Sigmoid colon (tissue), 7 donors: ENCODE measurements at regions of chr4 and their contacts with region 1.

Region 1: GRCh38 chr4:168831919-168832762 is 177.9 kb downstream of the CBR4 start:
- DNase-seq: peak; percentile 96
- H3K4me3 ChIP-seq: peak overlapping the region; percentile 76 to 97 (median 90)
- H3K27ac ChIP-seq: peak overlapping the region; percentile 94 to 99 (median 98)
- H3K4me1 ChIP-seq: peaks cover 0 to 33% (median 20%) of the 10 kb centered on the region in 4 donors
- H3K27me3 ChIP-seq: no peaks in the 10 kb centered on the region
- CTCF ChIP-seq: no peak
- EP300 ChIP-seq: peak in 3 of 4 donors; percentile 38 to 78 (median 66)
- POLR2A ChIP-seq: peak; percentile 96 to 98

Region 2: GRCh38 chr4:168631241-168632162 is 200.6 kb before region 1 on chr4:
- intact Hi-C with region 1: loop called (anchors 10 kb)
- DNase-seq: peak; percentile 86
- H3K4me3 ChIP-seq: peak overlapping the region; percentile 51 to 65 (median 60)
- H3K27ac ChIP-seq: peak overlapping the region; percentile 70 to 93 (median 83)
- H3K4me1 ChIP-seq: peaks cover 0 to 46% (median 39%) of the 10 kb centered on the region in 4 donors
- H3K27me3 ChIP-seq: no peaks in the 10 kb centered on the region
- CTCF ChIP-seq: peak; percentile 38 to 67 (median 56)
- EP300 ChIP-seq: no peak
- POLR2A ChIP-seq: no peak

Region 3: DNA sequence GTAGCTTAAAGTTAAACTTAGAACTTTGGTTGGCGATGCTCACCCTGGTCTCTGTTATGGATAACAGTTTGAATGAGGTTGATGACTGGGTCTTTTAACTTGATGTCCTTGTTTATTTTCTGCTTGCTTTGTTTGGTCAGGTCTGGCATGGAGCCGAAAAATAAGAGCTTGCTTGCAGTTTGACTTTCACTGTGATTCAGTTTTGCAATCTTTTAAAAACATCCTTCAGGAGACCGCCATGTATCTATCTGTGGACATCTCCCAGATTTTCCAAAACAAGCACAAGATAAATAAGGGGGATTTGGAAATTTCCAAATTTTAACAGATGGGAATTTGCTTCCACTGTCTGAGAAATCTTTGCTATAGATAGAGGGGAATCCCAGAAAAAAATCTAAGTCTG is 88.5 kb before region 1 on chr4:
- intact Hi-C with region 1: no loop called
- DNase-seq: no peak
- H3K4me3 ChIP-seq: no peak overlapping the region
- H3K27ac ChIP-seq: no peak overlapping the region
- H3K4me1 ChIP-seq: peaks cover 0 to 19% (median 0%) of the 10 kb centered on the region in 4 donors
- H3K27me3 ChIP-seq: no peaks in the 10 kb centered on the region
- CTCF ChIP-seq: no peak
- EP300 ChIP-seq: no peak
- POLR2A ChIP-seq: no peak

Region 4: GRCh38 chr4:168815379-168816345 is 16.5 kb before region 1 on chr4:
- intact Hi-C with region 1: loop called (anchors 1 kb)
- DNase-seq: peak; percentile 70
- H3K4me3 ChIP-seq: peak overlapping the region in 3 of 4 donors; percentile 17 to 30 (median 28)
- H3K27ac ChIP-seq: peak overlapping the region; percentile 83 to 94 (median 86)
- H3K4me1 ChIP-seq: peaks cover 0 to 84% (median 65%) of the 10 kb centered on the region in 4 donors
- H3K27me3 ChIP-seq: no peaks in the 10 kb centered on the region
- CTCF ChIP-seq: no peak
- EP300 ChIP-seq: peak; percentile 74 to 97 (median 92)
- POLR2A ChIP-seq: no peak

Region 5: GRCh38 chr4:168868044-168868781 is 36.1 kb after region 1 on chr4:
- intact Hi-C with region 1: no loop called
- DNase-seq: no peak
- H3K4me3 ChIP-seq: no peak overlapping the region
- H3K27ac ChIP-seq: peak overlapping the region; percentile 51 to 99 (median 81)
- H3K4me1 ChIP-seq: peaks cover 0 to 100% (median 96%) of the 10 kb centered on the region in 4 donors
- H3K27me3 ChIP-seq: no peaks in the 10 kb centered on the region
- CTCF ChIP-seq: no peak
- EP300 ChIP-seq: no peak
- POLR2A ChIP-seq: no peak